ENCODE measurements at regions of chr7 and their contacts with region 1.

Region 1: GRCh38 chr7:73515178-73515577 is 6.9 kb downstream of the BAZ1B start:
- DNase-seq: peak in 2 of 4 experiments; percentile 23 to 27
- ATAC-seq: peak; percentile 32; the same call in 2 of the 3 replicates
- H3K4me3 ChIP-seq: no peak overlapping the region
- H3K27ac ChIP-seq: no peak overlapping the region
- H3K4me1 ChIP-seq: peaks cover 3 to 9% of the 10 kb centered on the region in 2 experiments; a peak in 3 of 5 replicates
- H3K27me3 ChIP-seq: no peaks in the 10 kb centered on the region
- CTCF ChIP-seq: no peak
- EP300 ChIP-seq: no peak
- POLR2A ChIP-seq: no peak
- RAD21 ChIP-seq: no peak

Region 2: GRCh38 chr7:73504017-73504416 is 11.2 kb before region 1 on chr7:
- CTCF ChIA-PET with region 1: no interaction called
- POLR2A ChIA-PET with region 1: interaction called, 14 read pairs
- in situ Hi-C with region 1: no loop called
- intact Hi-C with region 1: no loop called
- DNase-seq: no peak
- ATAC-seq: no peak
- H3K4me3 ChIP-seq: no peak overlapping the region
- H3K27ac ChIP-seq: no peak overlapping the region
- H3K4me1 ChIP-seq: no peaks in the 10 kb centered on the region; a peak in 1 of 5 replicates
- H3K27me3 ChIP-seq: no peaks in the 10 kb centered on the region
- CTCF ChIP-seq: no peak
- EP300 ChIP-seq: no peak
- POLR2A ChIP-seq: no peak
- RAD21 ChIP-seq: no peak

Measured in K562 (cell line).